Naive thymus-derived CD8-positive, alpha-beta T cell (primary cell): ENCODE measurements at regions of chr2 and their contacts with region 1.

Region 1: DNA sequence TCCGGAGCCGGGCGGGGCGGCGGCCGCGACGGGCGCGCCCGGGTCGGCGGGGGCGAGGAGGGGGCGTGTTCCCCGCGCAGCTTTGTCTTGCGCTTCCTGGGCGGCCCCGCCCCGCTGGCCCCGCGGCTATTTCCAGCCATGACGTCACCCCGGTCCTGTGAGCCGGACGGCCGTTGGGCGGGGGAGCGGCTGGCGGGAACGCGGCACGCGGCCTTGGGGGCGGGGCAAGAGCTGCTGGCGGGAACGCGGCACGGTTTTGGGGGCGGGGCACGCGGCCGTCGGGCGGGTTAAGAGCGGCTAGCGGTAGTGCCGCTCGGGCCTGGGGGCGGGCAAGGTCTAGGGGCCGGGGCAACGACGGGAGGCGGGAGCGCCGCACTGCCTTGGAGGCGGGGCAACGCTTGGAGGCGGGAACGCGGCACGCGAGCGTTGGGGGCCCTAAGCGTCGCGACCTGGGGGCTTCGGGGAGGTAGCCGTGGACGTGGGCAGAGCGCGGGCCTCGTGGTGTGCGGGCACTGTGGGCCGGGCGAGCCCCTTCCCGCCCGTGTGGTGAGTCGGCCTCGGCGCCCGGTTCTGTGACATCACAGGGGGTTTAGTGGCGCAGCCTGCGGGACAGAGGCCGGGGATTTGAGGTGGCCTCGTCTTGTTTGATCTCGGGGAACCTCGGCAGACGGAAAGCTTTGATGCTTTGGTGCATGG is 704 bp downstream of the KLF11 start:
- DNase-seq: peak; percentile 84 to 95 (median 92)
- ATAC-seq: peak; percentile 67 to 76
- H3K4me3 Mint-ChIP-seq: peak overlapping the region; percentile 74 to 89 (median 84)
- H3K27ac Mint-ChIP-seq: peak overlapping the region; percentile 37 to 97 (median 91)
- H3K4me1 Mint-ChIP-seq: peaks cover 16 to 36% (median 32%) of the 10 kb centered on the region in 4 donors
- H3K27me3 Mint-ChIP-seq: no peaks in the 10 kb centered on the region

Region 2: DNA sequence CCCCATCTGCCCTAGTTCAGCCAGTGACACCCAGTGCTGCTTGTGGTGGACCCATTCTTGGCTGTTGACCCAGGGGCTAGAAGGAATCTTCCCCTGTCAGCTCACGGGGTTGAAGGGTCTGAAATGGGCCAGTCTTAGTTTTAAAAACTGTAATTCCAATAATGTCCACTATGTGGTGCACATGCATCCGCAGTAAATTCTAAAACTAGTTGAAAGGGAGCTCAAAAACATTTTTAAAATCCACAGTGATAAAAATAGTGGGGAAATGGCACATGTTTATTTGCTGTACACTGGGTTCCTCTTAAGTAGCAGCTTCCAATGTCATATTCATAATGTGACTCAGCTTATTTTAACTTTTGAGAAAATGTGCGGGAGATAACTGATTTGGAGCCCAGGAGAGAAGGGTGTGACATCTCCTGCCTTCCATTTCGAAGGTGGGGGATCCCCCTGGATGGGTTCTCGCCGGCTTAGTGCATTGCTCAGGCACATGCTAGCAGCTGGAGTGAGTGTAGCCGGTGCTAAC is 59.8 kb before region 1 on chr2:
- POLR2A ChIA-PET with region 1: interaction called, 27 read pairs
- DNase-seq: peak in 6 of 10 donors; percentile 12 to 71 (median 38)
- ATAC-seq: peak; percentile 77 to 79
- H3K4me3 Mint-ChIP-seq: no peak overlapping the region
- H3K27ac Mint-ChIP-seq: peak overlapping the region in 1 of 10 donors; percentile 81
- H3K4me1 Mint-ChIP-seq: peaks cover 6 to 14% (median 12%) of the 10 kb centered on the region in 4 donors
- H3K27me3 Mint-ChIP-seq: peaks cover 0 to 12% (median 5%) of the 10 kb centered on the region in 5 donors

Region 3: GRCh38 chr2:10028988-10029874 is 14.8 kb before region 1 on chr2:
- POLR2A ChIA-PET with region 1: interaction called, 53 read pairs
- DNase-seq: peak in 8 of 10 donors; percentile 18 to 79 (median 46)
- ATAC-seq: peak; percentile 93 to 97
- H3K4me3 Mint-ChIP-seq: peak overlapping the region; percentile 40 to 83 (median 64)
- H3K27ac Mint-ChIP-seq: peak overlapping the region in 9 of 10 donors; percentile 53 to 92 (median 74)
- H3K4me1 Mint-ChIP-seq: peaks cover 19 to 52% (median 31%) of the 10 kb centered on the region in 4 donors
- H3K27me3 Mint-ChIP-seq: no peaks in the 10 kb centered on the region

Region 4: GRCh38 chr2:10072656-10073480 is 28.8 kb after region 1 on chr2:
- POLR2A ChIA-PET with region 1: no interaction called
- DNase-seq: peak; percentile 55 to 88 (median 76)
- ATAC-seq: peak; percentile 95 to 98
- H3K4me3 Mint-ChIP-seq: no peak overlapping the region
- H3K27ac Mint-ChIP-seq: peak overlapping the region in 1 of 10 donors; percentile 38
- H3K4me1 Mint-ChIP-seq: peaks cover 3 to 7% (median 4%) of the 10 kb centered on the region in 4 donors
- H3K27me3 Mint-ChIP-seq: peaks cover 28 to 57% (median 42%) of the 10 kb centered on the region in 5 donors